Activated CD4-positive, alpha-beta T cell treated with anti-CD3 and anti-CD28 coated beads for 36 hours (primary cell): ENCODE measurements at regions of chr11 and their contacts with region 1.

Region 1: GRCh38 chr11:116853461-116854073 is 16.1 kb upstream of the APOA1 start:
- DNase-seq: peak; percentile 70
- ATAC-seq: peak; percentile 92
- H3K4me3 Mint-ChIP-seq: peak overlapping the region; percentile 51
- H3K27ac Mint-ChIP-seq: peak overlapping the region; percentile 90
- H3K4me1 Mint-ChIP-seq: peaks cover 70% of the 10 kb centered on the region
- H3K27me3 Mint-ChIP-seq: no peaks in the 10 kb centered on the region

Region 2: GRCh38 chr11:115919341-115920091 is 934.1 kb before region 1 on chr11:
- CTCF ChIA-PET with region 1: no interaction called
- POLR2A ChIA-PET with region 1: no interaction called
- intact Hi-C with region 1: loop called in 1 of 2 experiments (anchors 5 kb)
- DNase-seq: peak; percentile 39
- ATAC-seq: peak; percentile 91
- H3K4me3 Mint-ChIP-seq: no peak overlapping the region
- H3K27ac Mint-ChIP-seq: peak overlapping the region; percentile 77
- H3K4me1 Mint-ChIP-seq: peaks cover 25% of the 10 kb centered on the region
- H3K27me3 Mint-ChIP-seq: peaks cover 22% of the 10 kb centered on the region

Region 3: DNA sequence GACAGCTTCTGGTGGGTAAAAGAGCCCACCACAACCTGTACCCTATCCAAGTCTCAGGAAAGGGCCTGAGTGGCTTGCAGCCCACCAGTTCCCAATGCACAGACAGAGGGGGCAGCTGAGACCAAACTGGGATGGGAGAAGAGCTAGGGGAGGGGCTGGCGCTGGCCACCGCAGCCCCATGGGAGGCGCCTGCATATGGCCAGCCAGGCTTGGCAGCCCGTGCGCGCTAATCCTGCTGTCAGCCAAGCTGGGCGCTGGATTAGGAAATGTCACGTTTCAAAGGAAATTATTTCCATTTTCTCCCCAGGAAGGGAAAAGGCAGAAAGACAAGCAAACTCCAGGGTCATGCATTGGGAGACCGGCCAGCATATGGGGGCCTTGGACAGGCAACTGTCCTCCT is 317.6 kb before region 1 on chr11:
- CTCF ChIA-PET with region 1: no interaction called
- POLR2A ChIA-PET with region 1: no interaction called
- intact Hi-C with region 1: no loop called
- DNase-seq: no peak
- ATAC-seq: no peak
- H3K4me3 Mint-ChIP-seq: no peak overlapping the region
- H3K27ac Mint-ChIP-seq: no peak overlapping the region
- H3K4me1 Mint-ChIP-seq: no peaks in the 10 kb centered on the region
- H3K27me3 Mint-ChIP-seq: peaks cover 21% of the 10 kb centered on the region

Region 4: DNA sequence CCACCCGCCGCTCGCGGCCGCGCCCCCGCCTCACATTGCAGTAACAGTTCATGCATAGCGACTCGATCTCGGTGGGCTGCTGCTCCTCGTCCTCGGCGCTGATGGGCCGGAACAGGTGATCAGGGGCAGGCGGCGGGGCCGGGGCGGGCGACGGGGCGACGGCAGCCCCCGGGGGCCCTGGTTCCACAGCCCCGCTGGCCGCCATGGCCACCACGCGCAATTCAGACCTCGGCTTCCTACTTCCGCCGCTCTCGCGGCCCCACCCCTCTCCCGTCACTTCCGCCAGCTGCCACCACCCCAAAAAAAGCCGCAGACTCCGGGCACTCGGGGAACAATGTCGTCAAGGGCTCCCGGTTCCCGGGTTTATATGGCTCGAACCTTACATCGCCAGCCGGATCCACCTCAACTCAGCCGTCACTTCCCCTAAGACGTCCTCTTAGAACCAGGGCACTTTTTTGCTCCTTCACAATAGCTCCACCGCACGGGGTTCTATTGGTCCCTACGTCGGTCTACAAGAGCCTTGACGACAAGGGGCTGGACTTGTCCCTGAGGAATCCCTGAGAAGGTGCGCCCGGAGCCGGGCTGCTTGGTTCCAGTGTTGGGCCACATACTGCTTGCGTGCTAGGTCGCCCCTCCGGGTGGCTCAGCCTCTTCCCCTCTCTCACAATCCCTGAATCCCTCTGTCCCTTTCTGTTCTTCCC is 65.6 kb before region 1 on chr11 and contains the start of gene ZPR1:
- CTCF ChIA-PET with region 1: interaction called, 22 read pairs
- POLR2A ChIA-PET with region 1: interaction called, 3 read pairs
- intact Hi-C with region 1: loop called (anchors 1 to 5 kb)
- DNase-seq: peak; percentile 90
- ATAC-seq: peak; percentile 76
- H3K4me3 Mint-ChIP-seq: peak within 1 kb of the TSS; percentile 96
- H3K27ac Mint-ChIP-seq: peak within 1 kb of the TSS; percentile 88
- H3K4me1 Mint-ChIP-seq: peaks cover 52% of the 10 kb centered on the region
- H3K27me3 Mint-ChIP-seq: no peaks in the 10 kb centered on the region
- total RNA-seq, gene ZPR1: 88.8 to 106 TPM

Region 5: GRCh38 chr11:116879800-116880625 is 26.4 kb after region 1 on chr11:
- CTCF ChIA-PET with region 1: interaction called, 12 read pairs
- POLR2A ChIA-PET with region 1: interaction called, 3 read pairs
- intact Hi-C with region 1: loop called in 1 of 2 experiments (anchors 2 kb)
- DNase-seq: no peak
- ATAC-seq: peak; percentile 65
- H3K4me3 Mint-ChIP-seq: no peak overlapping the region
- H3K27ac Mint-ChIP-seq: no peak overlapping the region
- H3K4me1 Mint-ChIP-seq: peaks cover 22% of the 10 kb centered on the region
- H3K27me3 Mint-ChIP-seq: no peaks in the 10 kb centered on the region

Region 6: DNA sequence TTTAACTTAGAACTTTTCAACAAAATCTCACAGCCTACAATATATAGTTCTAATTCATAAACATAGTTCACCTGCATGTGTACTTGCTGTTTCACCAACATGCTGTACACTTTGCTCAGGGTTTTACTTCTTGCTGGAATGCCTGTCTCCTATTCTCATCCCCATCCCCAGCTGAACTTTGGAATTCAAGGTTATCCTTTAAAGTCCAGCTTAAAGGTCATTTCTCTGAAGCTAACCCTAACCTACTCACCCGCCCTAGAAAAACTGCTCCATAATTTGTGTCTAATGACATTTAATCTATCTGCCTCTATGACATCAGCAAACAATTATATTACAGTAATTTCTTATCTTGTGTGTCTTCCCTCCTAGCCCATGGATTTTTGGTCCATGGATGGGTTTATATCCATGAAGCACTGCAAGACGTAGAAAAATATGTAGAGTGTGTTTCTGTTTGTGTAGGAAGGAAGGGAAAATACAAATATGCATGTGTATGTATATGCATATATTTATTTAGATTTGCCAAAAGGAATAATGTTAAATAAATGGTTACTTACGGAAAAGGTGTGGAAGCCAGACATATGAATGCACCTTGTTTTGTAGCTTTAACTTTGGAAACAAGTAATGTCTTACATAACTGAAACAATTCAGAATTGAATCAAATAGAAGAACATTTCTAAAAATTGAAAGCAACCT is 83.3 kb after region 1 on chr11:
- CTCF ChIA-PET with region 1: no interaction called
- POLR2A ChIA-PET with region 1: no interaction called
- intact Hi-C with region 1: no loop called
- DNase-seq: no peak
- ATAC-seq: no peak
- H3K4me3 Mint-ChIP-seq: no peak overlapping the region
- H3K27ac Mint-ChIP-seq: no peak overlapping the region
- H3K4me1 Mint-ChIP-seq: peaks cover 14% of the 10 kb centered on the region
- H3K27me3 Mint-ChIP-seq: no peaks in the 10 kb centered on the region

Region 7: DNA sequence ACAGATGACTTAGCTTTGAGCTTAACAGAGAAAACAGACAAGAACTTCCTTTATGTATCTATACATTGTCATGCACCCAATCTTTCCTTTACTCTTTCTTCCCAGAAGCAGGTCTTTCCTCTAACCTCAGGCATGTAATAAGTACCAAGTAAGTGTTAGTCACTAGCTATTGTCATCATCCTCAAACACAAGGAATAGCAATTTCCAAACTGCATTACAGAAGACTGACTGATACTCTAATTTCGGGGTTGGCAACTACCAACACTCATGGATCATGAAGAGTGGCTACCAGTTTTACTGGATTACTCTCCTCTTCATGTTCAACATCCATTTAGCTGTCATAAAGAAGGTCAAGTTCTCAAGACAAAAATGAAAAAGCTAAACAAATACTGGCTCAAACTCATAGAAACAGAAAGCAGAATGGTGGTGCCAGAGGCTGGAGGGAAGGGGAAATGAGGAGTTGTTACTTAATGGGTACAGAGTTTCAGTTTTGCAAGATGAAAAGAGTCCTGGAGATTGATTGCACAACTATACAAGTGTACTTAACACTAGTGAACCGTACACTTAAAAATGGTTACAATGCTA is 133.0 kb after region 1 on chr11:
- CTCF ChIA-PET with region 1: interaction called, 3 read pairs
- POLR2A ChIA-PET with region 1: interaction called, 5 read pairs
- intact Hi-C with region 1: loop called (anchors 1 to 5 kb)
- DNase-seq: peak; percentile 31
- ATAC-seq: peak; percentile 82
- H3K4me3 Mint-ChIP-seq: peak overlapping the region; percentile 30
- H3K27ac Mint-ChIP-seq: peak overlapping the region; percentile 76
- H3K4me1 Mint-ChIP-seq: peaks cover 71% of the 10 kb centered on the region
- H3K27me3 Mint-ChIP-seq: no peaks in the 10 kb centered on the region

Region 8: GRCh38 chr11:117026593-117027330 is 173.2 kb after region 1 on chr11:
- CTCF ChIA-PET with region 1: interaction called, 4 read pairs
- POLR2A ChIA-PET with region 1: interaction called, 6 read pairs
- intact Hi-C with region 1: loop called (anchors 1 kb)
- DNase-seq: no peak
- ATAC-seq: peak; percentile 89
- H3K4me3 Mint-ChIP-seq: no peak overlapping the region
- H3K27ac Mint-ChIP-seq: peak overlapping the region; percentile 83
- H3K4me1 Mint-ChIP-seq: peaks cover 66% of the 10 kb centered on the region
- H3K27me3 Mint-ChIP-seq: no peaks in the 10 kb centered on the region

Region 9: GRCh38 chr11:117083011-117083935 is 229.7 kb after region 1 on chr11:
- CTCF ChIA-PET with region 1: no interaction called
- POLR2A ChIA-PET with region 1: no interaction called
- intact Hi-C with region 1: no loop called
- DNase-seq: no peak
- ATAC-seq: no peak
- H3K4me3 Mint-ChIP-seq: no peak overlapping the region
- H3K27ac Mint-ChIP-seq: no peak overlapping the region
- H3K4me1 Mint-ChIP-seq: peaks cover 53% of the 10 kb centered on the region
- H3K27me3 Mint-ChIP-seq: no peaks in the 10 kb centered on the region

Region 10: GRCh38 chr11:117178210-117179034 is 324.9 kb after region 1 on chr11 and contains the start of gene SIDT2:
- CTCF ChIA-PET with region 1: interaction called, 5 read pairs
- POLR2A ChIA-PET with region 1: no interaction called
- intact Hi-C with region 1: loop called in 1 of 2 experiments (anchors 1 kb)
- DNase-seq: peak; percentile 95
- ATAC-seq: peak; percentile 91
- H3K4me3 Mint-ChIP-seq: peak within 1 kb of the TSS; percentile 87
- H3K27ac Mint-ChIP-seq: peak within 1 kb of the TSS; percentile 75
- H3K4me1 Mint-ChIP-seq: peaks cover 33% of the 10 kb centered on the region
- H3K27me3 Mint-ChIP-seq: no peaks in the 10 kb centered on the region
- total RNA-seq, gene SIDT2: 21.5 to 23.7 TPM